MCF 10A (cell line): ENCODE measurements at regions of chr5 and their contacts with region 1.

Region 1: DNA sequence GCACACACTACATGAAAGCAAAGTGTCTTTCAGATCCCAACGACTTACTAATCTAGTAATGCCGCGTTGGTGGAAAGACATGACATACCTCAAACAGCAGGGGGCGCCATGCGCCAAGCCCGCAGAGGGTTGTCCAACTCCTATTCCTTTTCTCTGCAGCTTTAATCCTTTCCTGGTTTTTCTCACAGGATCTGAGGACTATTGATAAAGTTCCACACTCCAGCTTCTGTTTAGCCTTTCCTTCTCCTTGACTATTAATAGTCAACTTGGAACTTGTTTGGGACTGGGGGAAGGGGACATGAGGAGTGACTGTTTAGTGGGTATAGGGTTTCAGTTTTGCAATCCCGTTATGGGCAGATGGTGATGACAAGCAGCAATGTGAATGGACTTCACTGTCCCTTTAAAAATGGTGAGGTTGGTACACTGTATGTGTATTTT is 62.9 kb downstream of the OTULIN start:
- DNase-seq: peak; percentile 82
- H3K4me3 Mint-ChIP-seq: no peak overlapping the region
- H3K27ac Mint-ChIP-seq: no peak overlapping the region
- H3K4me1 Mint-ChIP-seq: peaks cover 10% of the 10 kb centered on the region
- H3K27me3 Mint-ChIP-seq: no peaks in the 10 kb centered on the region
- CTCF ChIP-seq: peak; percentile 92

Region 2: DNA sequence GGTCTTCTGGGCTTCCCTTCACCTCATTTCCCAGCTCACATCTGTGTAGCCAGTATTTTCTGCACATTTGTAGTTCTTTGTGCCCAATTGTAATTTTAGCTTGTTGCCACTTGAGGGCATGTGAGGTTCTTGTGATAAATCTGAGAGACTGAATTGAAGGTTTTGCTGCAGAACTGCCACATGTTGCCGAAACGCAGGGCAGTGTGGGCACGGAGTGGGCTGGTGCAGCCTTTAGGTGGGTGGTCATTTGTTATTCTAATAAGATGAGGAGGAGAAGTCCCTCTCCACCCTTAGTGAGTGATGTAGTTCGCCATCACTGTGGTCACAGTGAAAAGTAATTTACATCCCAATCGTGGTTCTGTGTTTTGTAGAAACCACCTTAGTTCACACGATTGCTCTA is 41.7 kb before region 1 on chr5:
- CTCF ChIA-PET with region 1: interaction called, 46 read pairs
- POLR2A ChIA-PET with region 1: no interaction called
- intact Hi-C with region 1: loop called (anchors 2 kb)
- DNase-seq: peak; percentile 51
- H3K4me3 Mint-ChIP-seq: no peak overlapping the region
- H3K27ac Mint-ChIP-seq: peak overlapping the region; percentile 14
- H3K4me1 Mint-ChIP-seq: peaks cover 19% of the 10 kb centered on the region
- H3K27me3 Mint-ChIP-seq: no peaks in the 10 kb centered on the region
- CTCF ChIP-seq: peak; percentile 60

Region 3: GRCh38 chr5:14714706-14715105 is 12.7 kb before region 1 on chr5:
- CTCF ChIA-PET with region 1: interaction called, 26 read pairs
- POLR2A ChIA-PET with region 1: interaction called, 3 read pairs
- intact Hi-C with region 1: no loop called
- DNase-seq: peak; percentile 27
- H3K4me3 Mint-ChIP-seq: no peak overlapping the region
- H3K27ac Mint-ChIP-seq: no peak overlapping the region
- H3K4me1 Mint-ChIP-seq: no peaks in the 10 kb centered on the region
- H3K27me3 Mint-ChIP-seq: no peaks in the 10 kb centered on the region
- CTCF ChIP-seq: no peak

Region 4: DNA sequence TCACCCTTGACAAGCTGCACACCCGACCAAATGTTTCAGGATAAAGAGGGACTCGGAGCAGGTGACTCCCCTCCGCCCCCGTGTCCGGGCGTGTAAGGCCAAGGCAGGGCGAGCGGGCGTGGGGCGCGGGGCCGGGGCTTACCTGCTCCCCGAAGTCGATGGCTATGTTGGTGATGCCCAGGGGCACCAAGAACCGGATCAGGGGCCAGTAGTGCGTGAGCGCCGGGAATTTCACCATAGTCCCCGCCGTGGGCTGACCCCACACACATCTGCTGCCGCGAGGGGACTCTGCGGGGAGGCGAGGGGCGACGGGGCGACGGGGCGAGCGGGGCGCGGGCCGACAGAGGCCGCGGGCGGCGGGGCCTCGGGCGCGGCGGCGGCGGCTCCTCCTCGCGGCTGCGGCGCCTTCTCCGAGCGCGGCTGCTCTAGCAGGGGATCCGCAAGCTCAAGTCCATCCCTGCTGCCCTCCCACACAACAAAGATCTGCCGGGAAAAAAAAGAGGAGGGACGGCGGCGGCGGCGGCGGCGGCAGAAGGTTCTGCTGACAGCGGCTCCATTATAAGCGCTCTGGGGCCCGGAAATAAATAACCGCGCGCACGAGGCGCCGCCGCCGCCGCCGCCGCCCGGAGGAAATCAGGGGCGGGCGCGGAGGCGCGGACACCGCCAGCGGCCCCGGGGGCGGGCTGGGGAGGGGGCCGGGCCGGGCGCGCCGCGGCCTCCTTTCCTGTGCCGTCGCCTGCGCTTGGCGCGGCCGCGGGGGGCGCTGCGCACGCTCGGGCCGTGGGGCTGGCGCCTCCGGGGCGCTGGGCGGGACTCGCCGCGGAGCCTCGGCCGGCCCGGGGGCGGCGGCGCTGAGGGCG is 144.0 kb after region 1 on chr5 and contains the start of gene ANKH:
- CTCF ChIA-PET with region 1: interaction called, 16 read pairs
- POLR2A ChIA-PET with region 1: interaction called, 5 read pairs
- intact Hi-C with region 1: loop called (anchors 1 kb)
- DNase-seq: peak; percentile 72
- H3K4me3 Mint-ChIP-seq: peak within 1 kb of the TSS; percentile 80
- H3K27ac Mint-ChIP-seq: peak within 1 kb of the TSS; percentile 63
- H3K4me1 Mint-ChIP-seq: peaks cover 15% of the 10 kb centered on the region
- H3K27me3 Mint-ChIP-seq: no peaks in the 10 kb centered on the region
- CTCF ChIP-seq: no peak
- total RNA-seq, gene ANKH: 51.3 and 65.7 TPM in 2 replicates

Region 5: DNA sequence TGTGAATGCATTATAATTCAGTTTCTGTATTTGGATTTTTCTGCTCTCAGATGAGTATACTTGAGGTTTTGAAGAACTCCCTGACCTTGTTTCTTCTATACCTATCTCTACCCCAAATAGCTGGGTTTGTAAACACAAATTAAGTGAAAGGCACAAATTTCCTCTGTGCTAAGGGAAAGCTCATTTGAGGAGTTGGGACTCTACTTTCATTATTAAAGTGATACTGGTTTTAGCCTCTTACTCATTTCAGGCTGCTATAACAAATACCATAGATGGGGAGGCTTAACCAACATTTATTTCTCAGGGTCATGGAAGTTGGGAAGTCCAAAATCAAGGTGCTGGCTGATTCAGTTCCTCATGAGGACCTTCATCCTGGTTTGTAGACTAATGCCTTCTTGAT is 241.3 kb after region 1 on chr5:
- CTCF ChIA-PET with region 1: interaction called, 13 read pairs
- POLR2A ChIA-PET with region 1: no interaction called
- intact Hi-C with region 1: no loop called
- DNase-seq: no peak
- H3K4me3 Mint-ChIP-seq: no peak overlapping the region
- H3K27ac Mint-ChIP-seq: no peak overlapping the region
- H3K4me1 Mint-ChIP-seq: no peaks in the 10 kb centered on the region
- H3K27me3 Mint-ChIP-seq: no peaks in the 10 kb centered on the region
- CTCF ChIP-seq: no peak

Region 6: GRCh38 chr5:15013654-15014463 is 286.4 kb after region 1 on chr5:
- CTCF ChIA-PET with region 1: interaction called, 50 read pairs
- POLR2A ChIA-PET with region 1: interaction called, 4 read pairs
- intact Hi-C with region 1: loop called (anchors 1 kb)
- DNase-seq: peak; percentile 69
- H3K4me3 Mint-ChIP-seq: no peak overlapping the region
- H3K27ac Mint-ChIP-seq: no peak overlapping the region
- H3K4me1 Mint-ChIP-seq: peaks cover 14% of the 10 kb centered on the region
- H3K27me3 Mint-ChIP-seq: no peaks in the 10 kb centered on the region
- CTCF ChIP-seq: peak; percentile 56